BJ (cell line): ENCODE measurements at regions of chrX and their contacts with region 1.

Region 1: GRCh38 chrX:71128915-71129765 is 10.7 kb downstream of the MED12 start:
- DNase-seq: no peak
- H3K4me3 ChIP-seq: no peak overlapping the region
- H3K27me3 ChIP-seq: no peaks in the 10 kb centered on the region
- CTCF ChIP-seq: peak; percentile 82

Region 2: DNA sequence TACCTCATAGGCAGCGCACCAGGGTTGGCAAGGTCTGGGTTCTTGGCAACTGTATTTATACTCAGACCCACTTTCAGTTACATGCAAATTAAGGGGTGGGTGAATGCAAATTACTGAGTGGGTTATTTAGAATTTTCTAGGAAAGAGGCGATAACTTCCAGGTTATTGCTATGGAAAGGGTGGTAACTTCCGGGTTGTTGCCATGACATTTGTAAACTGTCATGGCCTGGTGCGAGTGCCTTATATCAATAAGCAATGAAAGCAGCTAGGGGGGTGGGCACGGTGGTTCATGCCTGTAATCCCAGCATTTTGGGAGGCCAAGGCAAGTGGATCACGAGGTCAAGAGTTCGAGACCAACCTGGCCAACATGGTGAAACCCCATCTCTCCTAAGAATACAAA is 140.7 kb before region 1 on chrX:
- CTCF ChIA-PET with region 1: no interaction called
- POLR2A ChIA-PET with region 1: no interaction called
- DNase-seq: no peak
- H3K4me3 ChIP-seq: no peak overlapping the region
- H3K27me3 ChIP-seq: no peaks in the 10 kb centered on the region
- CTCF ChIP-seq: no peak

Region 3: DNA sequence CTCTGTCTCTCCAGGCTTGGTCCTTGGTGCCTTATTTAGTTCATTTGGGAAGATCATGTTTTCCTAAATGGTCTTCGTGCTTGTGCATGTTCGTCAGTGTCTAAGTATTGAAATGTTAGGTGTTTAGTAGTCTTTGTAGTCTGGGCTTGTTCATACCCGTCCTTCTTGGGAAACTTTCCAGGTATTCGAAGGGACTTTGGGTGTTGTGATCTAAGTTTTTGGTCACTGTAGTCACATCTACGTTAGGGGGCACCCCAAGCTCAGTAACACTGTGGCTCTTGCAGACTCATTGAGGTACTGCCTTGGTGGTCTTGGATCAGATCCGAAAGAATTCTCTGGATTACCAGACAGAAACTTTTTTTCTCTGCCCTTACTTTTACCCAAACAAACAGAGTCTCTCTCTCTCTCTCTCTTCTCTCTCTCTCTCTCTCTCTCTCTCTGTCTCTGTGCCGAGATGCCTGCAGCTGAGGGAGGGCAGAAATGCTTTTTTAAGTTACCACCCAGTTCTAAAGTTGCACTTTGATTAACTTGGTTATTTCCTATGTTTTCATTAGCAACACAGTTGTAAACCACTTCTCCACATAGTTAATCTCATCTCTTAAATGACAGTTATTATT is 130.6 kb before region 1 on chrX:
- CTCF ChIA-PET with region 1: interaction called, 19 read pairs
- POLR2A ChIA-PET with region 1: no interaction called
- DNase-seq: no peak
- H3K4me3 ChIP-seq: no peak overlapping the region
- H3K27me3 ChIP-seq: no peaks in the 10 kb centered on the region
- CTCF ChIP-seq: peak; percentile 47; the same call in 1 of the 2 replicates

Region 4: DNA sequence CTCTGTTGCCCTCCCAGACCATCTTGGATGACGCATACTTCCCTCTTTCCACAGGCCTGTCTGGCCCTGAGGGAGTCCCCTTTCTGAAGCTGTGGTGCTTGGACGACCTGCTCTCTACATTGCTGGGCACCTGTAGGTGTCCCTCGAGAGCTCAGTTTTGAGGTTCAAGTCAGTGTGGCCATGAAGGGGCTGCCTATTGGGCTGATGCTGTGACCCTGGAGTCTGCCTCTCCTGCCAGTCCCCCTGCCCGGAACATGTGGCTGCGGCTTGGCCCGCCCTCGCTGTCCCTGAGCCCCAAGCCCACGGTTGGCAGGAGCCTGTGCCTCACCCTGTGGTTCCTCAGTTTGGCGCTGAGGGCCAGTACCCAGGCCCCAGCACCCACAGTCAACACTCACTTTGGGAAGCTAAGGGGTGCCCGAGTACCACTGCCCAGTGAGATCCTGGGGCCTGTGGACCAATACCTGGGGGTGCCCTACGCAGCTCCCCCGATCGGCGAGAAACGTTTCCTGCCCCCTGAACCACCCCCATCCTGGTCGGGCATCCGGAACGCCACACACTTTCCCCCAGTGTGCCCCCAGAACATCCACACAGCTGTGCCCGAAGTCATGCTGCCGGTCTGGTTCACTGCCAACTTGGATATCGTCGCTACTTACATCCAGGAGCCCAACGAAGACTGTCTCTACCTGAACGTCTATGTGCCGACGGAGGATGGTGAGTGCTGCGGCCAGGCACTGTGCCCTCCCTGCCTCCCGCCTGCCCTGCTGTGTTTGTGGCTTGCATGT is 18.5 kb after region 1 on chrX:
- CTCF ChIA-PET with region 1: no interaction called
- POLR2A ChIA-PET with region 1: no interaction called
- DNase-seq: no peak
- H3K4me3 ChIP-seq: no peak overlapping the region
- H3K27me3 ChIP-seq: no peaks in the 10 kb centered on the region
- CTCF ChIP-seq: no peak

Region 5: DNA sequence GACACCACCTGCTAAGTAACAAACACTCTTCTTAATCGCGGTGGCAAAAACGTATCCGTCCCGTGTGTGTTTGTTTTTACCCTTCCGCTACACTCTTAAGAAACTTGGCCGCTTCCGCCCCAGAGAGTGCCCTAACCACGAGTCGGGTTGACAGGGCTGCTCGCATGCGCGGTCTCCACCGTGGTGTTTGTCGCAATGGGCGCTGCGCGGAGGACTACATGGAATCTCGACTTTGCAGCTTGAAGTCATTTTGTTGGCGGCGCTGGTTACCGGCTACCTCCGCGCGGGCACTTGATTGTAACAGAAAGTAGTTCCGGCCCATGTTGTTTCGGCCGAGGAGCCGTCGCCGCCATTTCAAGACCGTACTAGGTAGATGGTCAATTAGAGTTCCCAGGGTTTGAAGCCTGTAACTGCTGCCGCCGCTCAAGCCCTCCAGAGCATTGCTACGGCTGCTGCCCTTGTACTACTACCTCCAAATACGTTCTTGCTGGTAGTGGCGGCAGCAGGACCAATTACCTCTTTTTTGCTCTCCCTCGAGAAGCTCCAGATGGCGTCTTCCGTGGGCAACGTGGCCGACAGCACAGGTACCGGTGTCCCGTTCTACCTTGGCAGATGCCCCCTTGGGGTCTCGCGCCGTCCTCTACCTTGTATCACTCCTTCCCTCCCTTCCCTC is 403.7 kb after region 1 on chrX and contains the start of gene OGT:
- CTCF ChIA-PET with region 1: no interaction called
- POLR2A ChIA-PET with region 1: no interaction called
- DNase-seq: peak; percentile 75
- H3K4me3 ChIP-seq: peak within 1 kb of the TSS; percentile 59
- H3K27me3 ChIP-seq: no peaks in the 10 kb centered on the region
- CTCF ChIP-seq: no peak
- polyA plus RNA-seq, gene OGT: 280 and 330 TPM in 2 replicates